ENCODE measurements at regions of chr10 and their contacts with region 1.

Region 1: DNA sequence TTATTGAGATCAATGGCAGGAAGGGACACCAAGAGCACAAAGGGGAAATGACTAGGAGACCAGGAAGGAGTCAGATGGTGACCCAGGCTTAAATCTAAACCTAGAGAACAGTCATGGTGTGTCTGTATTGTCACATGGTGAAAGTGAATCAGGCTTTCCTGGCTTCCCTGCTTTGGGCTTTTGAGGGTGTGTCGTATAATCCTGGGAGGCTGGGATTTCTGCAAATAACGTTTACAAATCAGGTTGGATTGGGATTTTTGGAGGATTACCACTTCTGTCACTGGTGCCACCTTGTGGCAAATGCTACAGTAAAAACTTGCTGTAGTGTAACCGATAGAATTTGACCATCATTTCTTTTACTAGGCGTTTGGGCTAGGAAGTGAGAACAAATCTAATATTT is 502.6 kb downstream of the NRG3 start:
- DNase-seq: no peak
- ATAC-seq: no peak
- H3K4me3 ChIP-seq: no peak overlapping the region
- H3K27ac ChIP-seq: no peak overlapping the region
- H3K4me1 ChIP-seq: no peaks in the 10 kb centered on the region
- H3K27me3 ChIP-seq: no peaks in the 10 kb centered on the region
- CTCF ChIP-seq: peak; percentile 49

Region 2: GRCh38 chr10:82206831-82207230 is 170.8 kb before region 1 on chr10:
- CTCF ChIA-PET with region 1: interaction called, 13 read pairs
- POLR2A ChIA-PET with region 1: no interaction called
- in situ Hi-C with region 1: no loop called
- intact Hi-C with region 1: no loop called
- DNase-seq: no peak
- ATAC-seq: no peak
- H3K4me3 ChIP-seq: no peak overlapping the region
- H3K27ac ChIP-seq: no peak overlapping the region
- H3K4me1 ChIP-seq: no peaks in the 10 kb centered on the region
- H3K27me3 ChIP-seq: no peaks in the 10 kb centered on the region
- CTCF ChIP-seq: no peak

Region 3: DNA sequence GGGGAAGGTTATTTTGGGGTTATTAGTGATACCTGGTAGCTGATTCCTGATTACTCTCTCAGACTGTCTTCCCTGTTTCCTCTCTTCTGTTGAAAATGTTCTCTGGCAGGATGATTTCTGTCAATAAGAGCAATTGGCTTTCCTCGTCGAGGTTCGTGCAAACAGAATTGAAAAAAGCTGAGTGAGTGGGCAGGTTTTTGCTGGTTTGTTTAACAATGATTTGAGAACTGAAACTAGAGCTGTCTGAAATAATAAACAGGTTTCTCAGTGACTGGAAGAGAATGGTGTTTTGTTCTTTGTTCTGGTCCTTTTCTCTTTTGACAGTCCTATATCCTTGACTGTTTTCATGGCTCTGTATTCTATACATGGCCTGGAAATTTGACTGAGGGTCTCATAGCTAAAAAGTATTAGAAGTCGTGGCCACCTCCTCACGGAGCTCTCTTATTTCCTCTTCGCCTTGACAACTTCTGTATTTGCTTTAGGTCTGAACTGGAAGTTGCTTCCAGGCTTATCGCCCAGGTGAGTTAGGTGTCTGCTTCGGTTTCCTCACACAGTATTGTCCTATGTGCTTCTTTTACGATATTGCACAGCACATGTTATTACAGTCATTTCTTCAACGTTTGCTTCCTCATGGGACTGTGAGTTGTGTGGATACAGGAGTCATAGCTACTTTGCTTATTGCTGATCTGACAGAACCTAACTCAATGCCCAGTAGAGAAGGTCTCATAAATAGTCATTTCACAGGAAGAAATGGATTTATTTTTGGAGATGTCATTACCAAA is 99.0 kb before region 1 on chr10:
- CTCF ChIA-PET with region 1: no interaction called
- POLR2A ChIA-PET with region 1: no interaction called
- in situ Hi-C with region 1: no loop called
- intact Hi-C with region 1: no loop called
- DNase-seq: no peak
- ATAC-seq: no peak
- H3K4me3 ChIP-seq: no peak overlapping the region
- H3K27ac ChIP-seq: no peak overlapping the region
- H3K4me1 ChIP-seq: no peaks in the 10 kb centered on the region
- H3K27me3 ChIP-seq: no peaks in the 10 kb centered on the region
- CTCF ChIP-seq: no peak

Region 4: GRCh38 chr10:82319562-82319961 is 58.0 kb before region 1 on chr10:
- CTCF ChIA-PET with region 1: no interaction called
- POLR2A ChIA-PET with region 1: no interaction called
- in situ Hi-C with region 1: no loop called
- intact Hi-C with region 1: no loop called
- DNase-seq: no peak
- ATAC-seq: no peak
- H3K4me3 ChIP-seq: no peak overlapping the region
- H3K27ac ChIP-seq: no peak overlapping the region
- H3K4me1 ChIP-seq: no peaks in the 10 kb centered on the region
- H3K27me3 ChIP-seq: no peaks in the 10 kb centered on the region
- CTCF ChIP-seq: no peak

Region 5: GRCh38 chr10:82358486-82359099 is 19.0 kb before region 1 on chr10:
- CTCF ChIA-PET with region 1: no interaction called
- POLR2A ChIA-PET with region 1: no interaction called
- in situ Hi-C with region 1: no loop called
- intact Hi-C with region 1: no loop called
- DNase-seq: peak; percentile 20
- ATAC-seq: no peak; the same call in none of the 2 replicates
- H3K4me3 ChIP-seq: no peak overlapping the region
- H3K27ac ChIP-seq: no peak overlapping the region
- H3K4me1 ChIP-seq: no peaks in the 10 kb centered on the region
- H3K27me3 ChIP-seq: no peaks in the 10 kb centered on the region
- CTCF ChIP-seq: no peak

Measured in Panc1 (cell line).